OCI-LY7 (cell line): ENCODE measurements at regions of chr22 and their contacts with region 1.

Region 1: DNA sequence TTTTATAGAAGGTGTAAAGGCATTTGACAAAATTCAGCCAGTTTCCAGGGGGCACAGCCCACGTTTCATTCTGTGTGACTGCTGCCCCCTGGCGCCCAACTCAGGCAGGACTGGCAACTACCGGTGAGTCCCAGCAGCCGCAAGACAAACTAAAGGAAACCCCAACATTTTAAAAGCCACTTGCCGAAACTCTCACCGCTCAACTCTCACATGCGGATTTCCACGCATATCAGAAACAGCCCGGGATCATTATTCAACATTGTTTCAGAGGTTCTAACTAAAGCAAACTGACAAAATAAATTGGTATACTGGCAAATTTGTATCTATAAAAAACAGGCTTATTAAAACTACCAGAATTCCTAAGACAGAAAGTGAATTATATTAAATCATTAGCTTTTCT is 48.2 kb downstream of the MORC2 start:
- DNase-seq: peak; percentile 82
- H3K4me3 ChIP-seq: peak overlapping the region; percentile 68
- H3K27ac ChIP-seq: no peak overlapping the region
- H3K4me1 ChIP-seq: peaks cover 12% of the 10 kb centered on the region
- CTCF ChIP-seq: peak; percentile 96

Region 2: DNA sequence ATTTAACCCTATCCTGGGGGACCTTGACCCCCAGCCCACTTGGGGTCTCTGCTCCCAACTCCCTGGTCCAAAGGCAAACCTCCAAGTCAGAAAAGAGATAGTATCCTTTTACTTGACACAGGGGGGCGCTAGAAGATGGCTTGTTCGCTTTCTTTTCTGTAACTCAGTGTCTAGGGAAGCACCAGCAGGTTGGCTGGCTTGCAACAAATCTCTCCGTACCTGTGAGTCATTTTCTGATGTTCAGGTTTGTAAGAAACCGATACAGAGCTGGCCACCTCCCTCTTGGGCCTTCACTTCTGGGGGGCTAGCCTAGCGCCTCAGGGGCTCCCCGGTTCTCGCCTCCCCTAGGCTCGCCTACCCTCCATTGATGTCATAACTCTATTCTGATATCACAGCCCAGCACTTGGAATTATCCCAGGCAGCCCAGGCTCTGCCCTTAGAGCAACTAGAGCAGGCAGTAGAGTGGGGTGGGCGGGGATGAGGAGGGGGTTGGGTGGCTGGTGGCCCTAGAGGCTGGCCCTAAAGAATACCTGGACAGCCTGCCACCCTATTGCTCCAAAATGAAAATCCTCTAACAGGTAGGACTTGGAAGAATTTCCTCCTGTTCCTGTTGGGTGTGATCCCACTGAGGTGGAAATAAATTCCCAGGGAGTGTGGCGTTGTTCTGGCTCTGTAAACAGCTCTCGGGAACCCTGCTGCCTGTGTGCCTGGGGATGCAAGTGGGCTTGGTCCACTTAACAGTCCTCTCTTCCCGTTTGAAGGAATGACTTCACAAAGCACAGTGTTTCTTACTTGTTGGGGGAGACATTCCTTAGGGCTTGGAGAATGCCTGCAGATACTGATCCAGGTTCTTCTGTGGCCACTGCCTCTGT is 156.4 kb before region 1 on chr22:
- CTCF ChIA-PET with region 1: no interaction called
- POLR2A ChIA-PET with region 1: interaction called, 4 read pairs
- intact Hi-C with region 1: loop called (anchors 1 kb)
- DNase-seq: peak; percentile 64
- H3K4me3 ChIP-seq: no peak overlapping the region
- H3K27ac ChIP-seq: no peak overlapping the region
- H3K4me1 ChIP-seq: no peaks in the 10 kb centered on the region
- CTCF ChIP-seq: peak; percentile 80

Region 3: GRCh38 chr22:30860176-30861105 is 60.0 kb before region 1 on chr22:
- CTCF ChIA-PET with region 1: no interaction called
- POLR2A ChIA-PET with region 1: no interaction called
- intact Hi-C with region 1: no loop called
- DNase-seq: no peak
- H3K4me3 ChIP-seq: no peak overlapping the region
- H3K27ac ChIP-seq: no peak overlapping the region
- H3K4me1 ChIP-seq: no peaks in the 10 kb centered on the region
- CTCF ChIP-seq: no peak

Region 4: DNA sequence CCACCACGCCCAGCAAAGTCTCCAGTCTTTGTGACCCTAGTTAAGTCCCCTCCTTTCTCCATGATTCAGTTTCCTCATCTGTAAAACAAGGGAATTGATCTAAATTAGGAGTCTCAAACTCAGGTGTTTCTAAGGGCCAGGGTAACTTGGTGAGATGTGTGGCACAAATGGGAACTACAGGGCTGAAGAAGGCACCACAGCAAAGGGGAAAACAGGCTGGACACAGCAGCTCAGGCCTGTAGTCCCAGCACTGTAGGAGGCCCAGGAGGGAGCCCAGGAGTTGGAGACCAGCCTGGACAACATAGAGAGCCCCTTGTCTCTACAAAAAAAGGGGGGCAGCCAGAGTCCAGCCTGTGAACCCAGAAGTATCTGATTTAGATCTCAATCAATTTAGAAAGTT is 441.3 kb after region 1 on chr22:
- CTCF ChIA-PET with region 1: no interaction called
- POLR2A ChIA-PET with region 1: no interaction called
- intact Hi-C with region 1: no loop called
- DNase-seq: no peak
- H3K4me3 ChIP-seq: no peak overlapping the region
- H3K27ac ChIP-seq: no peak overlapping the region
- H3K4me1 ChIP-seq: no peaks in the 10 kb centered on the region
- CTCF ChIP-seq: no peak